A549 (cell line): ENCODE measurements at regions of chr1 and their contacts with region 1.

Region 1: GRCh38 chr1:153633716-153634665 is at the start of gene CHTOP:
- DNase-seq: peak; percentile 97 to 99
- ATAC-seq: peak; percentile 89 to 94
- H3K4me3 ChIP-seq: peak within 1 kb of the TSS; percentile 90
- H3K27ac ChIP-seq: peak within 1 kb of the TSS; percentile 99 to 100
- H3K4me1 ChIP-seq: peaks cover 25% of the 10 kb centered on the region
- CTCF ChIP-seq: no peak
- EP300 ChIP-seq: no peak
- POLR2A ChIP-seq: peak; percentile 63
- RAD21 ChIP-seq: no peak
- polyA plus RNA-seq, gene CHTOP: 81.6 and 98.1 TPM in 2 replicates

Region 2: GRCh38 chr1:153375511-153375910 is 258.5 kb before region 1 on chr1 and contains the start of gene S100A12:
- CTCF ChIA-PET with region 1: no interaction called
- POLR2A ChIA-PET with region 1: no interaction called
- DNase-seq: peak in 1 of 2 experiments; percentile 13
- ATAC-seq: peak; percentile 74 to 79
- H3K4me3 ChIP-seq: no peak within 1 kb of the TSS
- H3K27ac ChIP-seq: peak within 1 kb of the TSS in 1 of 2 experiments; percentile 33; a peak in 2 of 6 replicates
- H3K4me1 ChIP-seq: peaks cover 5% of the 10 kb centered on the region; the same call in 1 of the 3 replicates
- CTCF ChIP-seq: no peak
- EP300 ChIP-seq: no peak
- POLR2A ChIP-seq: no peak
- RAD21 ChIP-seq: no peak
- polyA plus RNA-seq, gene S100A12: not detected in 2 replicates

Region 3: GRCh38 chr1:153545067-153546055 is 88.6 kb before region 1 on chr1 and contains the start of gene S100A4:
- CTCF ChIA-PET with region 1: no interaction called
- POLR2A ChIA-PET with region 1: interaction called, 10 read pairs
- DNase-seq: peak; percentile 94 to 97
- ATAC-seq: peak; percentile 70 to 79
- H3K4me3 ChIP-seq: peak within 1 kb of the TSS; percentile 62
- H3K27ac ChIP-seq: peak within 1 kb of the TSS; percentile 96 to 97
- H3K4me1 ChIP-seq: peaks cover 96% of the 10 kb centered on the region
- CTCF ChIP-seq: no peak
- EP300 ChIP-seq: no peak
- POLR2A ChIP-seq: peak; percentile 85
- RAD21 ChIP-seq: peak; percentile 12 to 24; a peak in 2 of 5 replicates
- polyA plus RNA-seq, gene S100A4: 590 and 814 TPM in 2 replicates

Region 4: GRCh38 chr1:153566440-153567379 is 67.3 kb before region 1 on chr1:
- CTCF ChIA-PET with region 1: interaction called, 253 read pairs
- POLR2A ChIA-PET with region 1: interaction called, 24 read pairs
- DNase-seq: peak; percentile 99
- ATAC-seq: peak; percentile 82 to 89
- H3K4me3 ChIP-seq: peak overlapping the region; percentile 15; the same call in 1 of the 3 replicates
- H3K27ac ChIP-seq: peak overlapping the region; percentile 97 to 100
- H3K4me1 ChIP-seq: peaks cover 57% of the 10 kb centered on the region
- CTCF ChIP-seq: no peak
- EP300 ChIP-seq: peak; percentile 75 to 85; a peak in 3 of 5 replicates
- POLR2A ChIP-seq: no peak
- RAD21 ChIP-seq: peak; percentile 30 to 58; a peak in 4 of 5 replicates

Region 5: DNA sequence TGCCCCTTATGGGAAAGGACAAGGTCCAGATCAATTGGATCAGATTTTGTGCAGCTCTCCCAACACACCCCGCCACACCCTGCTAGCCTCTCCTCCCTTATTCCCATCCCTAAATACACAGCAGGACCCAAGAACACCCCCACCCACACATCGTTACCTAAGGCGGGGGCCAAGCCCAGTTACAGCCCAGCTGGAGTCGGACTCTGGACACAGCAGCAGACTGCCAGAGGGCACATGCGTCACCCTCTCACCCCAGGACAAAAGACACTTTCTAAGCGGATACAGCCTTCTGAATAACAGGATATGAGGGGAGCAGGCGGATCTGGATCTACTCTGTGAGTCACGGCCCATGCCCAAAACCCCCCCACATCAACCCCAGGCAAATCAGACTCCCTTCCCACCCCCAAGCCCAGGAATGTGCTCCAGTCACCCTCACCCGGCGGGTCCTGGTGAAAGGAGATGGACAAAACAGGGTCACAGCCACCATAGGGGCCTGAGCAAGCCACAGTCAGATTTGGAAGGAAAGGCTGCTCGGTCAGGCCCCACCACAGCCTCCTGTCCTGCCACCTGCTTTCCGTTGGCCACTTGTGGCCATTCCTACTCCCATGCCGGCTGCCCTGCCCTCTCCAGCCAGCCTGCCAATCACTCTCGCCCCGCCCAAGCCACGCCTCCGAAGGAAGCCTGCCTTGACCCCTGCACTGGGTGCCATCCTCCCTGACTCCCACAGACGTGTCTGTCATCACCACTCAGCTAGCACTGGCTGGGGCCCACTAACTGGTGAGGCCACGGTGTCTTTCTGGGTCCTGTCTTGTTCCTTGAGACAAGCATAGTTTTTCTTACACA is 25.0 kb before region 1 on chr1:
- CTCF ChIA-PET with region 1: interaction called, 118 read pairs
- POLR2A ChIA-PET with region 1: interaction called, 49 read pairs
- DNase-seq: peak; percentile 88 to 98
- ATAC-seq: peak; percentile 73 to 82
- H3K4me3 ChIP-seq: peak overlapping the region; percentile 45
- H3K27ac ChIP-seq: peak overlapping the region; percentile 91 to 96
- H3K4me1 ChIP-seq: peaks cover 44% of the 10 kb centered on the region
- CTCF ChIP-seq: no peak
- EP300 ChIP-seq: no peak; a peak in 1 of 5 replicates
- POLR2A ChIP-seq: peak; percentile 46; the same call in 1 of the 2 replicates
- RAD21 ChIP-seq: no peak; a peak in 1 of 5 replicates

Region 6: GRCh38 chr1:153649863-153650235 is 15.9 kb after region 1 on chr1:
- CTCF ChIA-PET with region 1: interaction called, 9 read pairs
- POLR2A ChIA-PET with region 1: interaction called, 48 read pairs
- DNase-seq: no peak
- ATAC-seq: peak; percentile 47 to 53
- H3K4me3 ChIP-seq: no peak overlapping the region
- H3K27ac ChIP-seq: no peak overlapping the region
- H3K4me1 ChIP-seq: peaks cover 6% of the 10 kb centered on the region; the same call in 1 of the 3 replicates
- CTCF ChIP-seq: no peak
- EP300 ChIP-seq: no peak
- POLR2A ChIP-seq: no peak
- RAD21 ChIP-seq: no peak

Region 7: DNA sequence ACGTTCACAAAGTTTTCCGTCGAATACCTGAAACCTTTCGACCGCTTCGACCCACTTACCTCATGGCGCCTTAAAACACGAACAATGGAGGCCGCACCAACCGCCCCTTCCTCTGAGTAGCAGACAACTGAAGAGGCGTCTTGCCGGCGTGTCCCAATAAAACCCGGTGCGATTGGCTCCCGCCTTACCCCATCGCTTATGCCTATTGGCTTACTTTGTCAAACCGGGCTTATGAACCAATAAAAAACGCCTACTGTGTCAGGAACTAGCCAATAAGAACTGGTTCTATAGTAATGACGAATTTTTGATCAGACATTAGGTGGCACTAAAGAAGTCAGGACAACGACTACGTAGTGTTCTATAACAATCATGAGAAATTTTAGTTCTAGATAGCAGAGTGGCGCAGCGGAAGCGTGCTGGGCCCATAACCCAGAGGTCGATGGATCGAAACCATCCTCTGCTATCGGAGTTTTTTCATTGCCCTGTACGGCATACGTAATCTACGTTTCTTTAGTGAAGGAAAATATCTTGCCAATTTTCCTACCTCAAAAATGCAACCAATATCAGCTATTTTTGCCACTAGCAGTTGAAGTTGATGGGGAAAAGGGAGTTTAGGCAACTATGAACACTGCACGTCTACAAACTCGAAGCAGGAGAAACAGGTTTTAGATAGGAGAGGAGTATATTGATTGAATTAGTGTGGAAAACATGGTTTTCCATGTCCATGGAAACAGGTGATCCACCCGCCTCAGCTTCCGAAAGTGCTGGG is 37.1 kb after region 1 on chr1 and contains the start of gene ILF2:
- CTCF ChIA-PET with region 1: interaction called, 3 read pairs
- POLR2A ChIA-PET with region 1: interaction called, 10 read pairs
- DNase-seq: peak; percentile 100
- ATAC-seq: peak; percentile 94 to 98
- H3K4me3 ChIP-seq: peak within 1 kb of the TSS; percentile 78
- H3K27ac ChIP-seq: peak within 1 kb of the TSS; percentile 82 to 90
- H3K4me1 ChIP-seq: peaks cover 10% of the 10 kb centered on the region
- CTCF ChIP-seq: peak; percentile 49
- EP300 ChIP-seq: no peak
- POLR2A ChIP-seq: peak; percentile 84
- RAD21 ChIP-seq: no peak
- polyA plus RNA-seq, gene ILF2: 285 and 339 TPM in 2 replicates

Region 8: DNA sequence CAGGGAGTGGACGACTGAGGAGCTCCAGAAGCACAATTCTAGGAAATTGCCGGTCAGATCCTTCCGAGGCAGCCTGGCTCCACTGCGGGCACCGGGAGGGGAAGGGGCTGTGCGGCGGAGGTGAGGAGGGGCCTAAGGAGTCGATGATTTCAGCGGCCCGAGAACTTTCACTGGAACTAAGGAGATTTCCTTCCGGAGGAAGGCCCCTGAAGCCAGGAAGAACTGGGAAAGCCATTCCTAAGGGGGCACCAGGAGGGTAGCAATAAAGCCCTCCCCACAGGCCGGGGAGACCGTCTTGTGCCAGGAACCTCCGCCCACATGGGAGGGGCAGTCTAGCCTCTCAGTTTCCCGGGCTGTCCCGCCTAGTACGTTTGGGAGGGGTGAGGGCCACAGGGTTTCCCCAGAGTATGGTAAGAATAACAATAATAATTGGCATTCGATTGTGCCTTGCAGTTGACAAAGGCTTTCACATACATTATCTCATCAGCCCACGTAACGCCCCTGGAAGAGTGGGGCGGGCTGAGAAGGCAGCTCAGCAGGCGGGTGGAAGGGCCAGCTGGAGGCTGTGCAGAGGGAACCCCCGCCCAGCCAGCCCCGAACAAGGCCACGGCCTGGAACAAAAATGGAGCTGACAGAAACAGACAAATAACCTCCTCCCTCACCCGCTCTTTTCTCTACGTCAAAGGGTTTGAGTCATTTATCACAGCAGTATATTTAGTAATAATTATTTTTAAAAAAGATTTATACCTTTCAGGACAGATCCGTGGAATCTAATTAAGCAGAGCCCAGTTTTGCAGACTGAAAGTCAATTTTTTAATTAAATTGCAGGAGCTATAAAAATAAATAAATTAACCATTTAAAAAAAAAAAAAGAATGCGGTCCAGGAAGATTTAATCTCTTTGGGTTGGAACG is 64.3 kb after region 1 on chr1:
- CTCF ChIA-PET with region 1: no interaction called
- POLR2A ChIA-PET with region 1: no interaction called
- DNase-seq: no peak
- ATAC-seq: no peak
- H3K4me3 ChIP-seq: no peak overlapping the region
- H3K27ac ChIP-seq: peak overlapping the region; percentile 56 to 83
- H3K4me1 ChIP-seq: peaks cover 31% of the 10 kb centered on the region
- CTCF ChIP-seq: no peak
- EP300 ChIP-seq: no peak
- POLR2A ChIP-seq: no peak
- RAD21 ChIP-seq: no peak

Region 9: DNA sequence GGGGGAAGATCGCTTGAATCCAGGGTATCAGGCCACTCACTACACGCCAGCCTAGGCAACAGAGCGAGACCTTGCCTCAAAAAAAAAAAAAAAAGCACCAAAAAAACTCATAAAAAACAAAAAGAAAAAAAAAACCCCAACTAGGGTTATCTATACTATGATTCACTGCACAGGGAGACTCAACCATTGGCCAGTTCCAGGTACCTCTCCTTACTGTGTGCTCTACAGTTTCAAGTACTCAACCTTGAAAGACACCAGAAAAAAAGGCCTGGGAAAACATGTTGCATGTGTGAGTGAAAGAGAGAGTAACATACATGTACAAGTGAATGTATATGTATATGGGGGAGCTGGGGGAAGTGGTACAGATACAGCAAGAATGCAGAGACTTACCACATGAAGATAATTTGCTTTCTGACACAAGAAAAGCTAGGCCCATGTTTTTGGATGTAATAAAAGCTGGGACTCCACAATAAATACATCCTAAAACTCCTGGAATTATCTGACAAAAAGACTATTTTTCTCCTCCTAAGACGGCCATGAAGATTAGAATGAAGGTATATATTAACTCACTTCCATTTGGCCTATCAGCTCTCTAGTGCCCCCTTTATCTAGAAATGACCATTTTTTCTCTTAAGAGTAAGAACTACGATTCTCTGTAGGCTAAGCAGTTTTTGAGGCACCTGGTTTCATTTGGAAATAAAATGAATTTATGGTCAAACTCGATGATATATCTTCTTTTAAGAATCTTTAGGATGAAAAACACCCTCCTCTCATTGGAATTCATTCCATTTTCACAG is 193.4 kb after region 1 on chr1:
- CTCF ChIA-PET with region 1: no interaction called
- POLR2A ChIA-PET with region 1: no interaction called
- DNase-seq: no peak
- ATAC-seq: peak in 1 of 2 experiments; percentile 59; a peak in 2 of 6 replicates
- H3K4me3 ChIP-seq: no peak overlapping the region
- H3K27ac ChIP-seq: no peak overlapping the region
- H3K4me1 ChIP-seq: no peaks in the 10 kb centered on the region
- CTCF ChIP-seq: no peak
- EP300 ChIP-seq: no peak
- POLR2A ChIP-seq: no peak
- RAD21 ChIP-seq: no peak